B cell (primary cell): ENCODE measurements at regions of chr3 and their contacts with region 1.

Region 1: DNA sequence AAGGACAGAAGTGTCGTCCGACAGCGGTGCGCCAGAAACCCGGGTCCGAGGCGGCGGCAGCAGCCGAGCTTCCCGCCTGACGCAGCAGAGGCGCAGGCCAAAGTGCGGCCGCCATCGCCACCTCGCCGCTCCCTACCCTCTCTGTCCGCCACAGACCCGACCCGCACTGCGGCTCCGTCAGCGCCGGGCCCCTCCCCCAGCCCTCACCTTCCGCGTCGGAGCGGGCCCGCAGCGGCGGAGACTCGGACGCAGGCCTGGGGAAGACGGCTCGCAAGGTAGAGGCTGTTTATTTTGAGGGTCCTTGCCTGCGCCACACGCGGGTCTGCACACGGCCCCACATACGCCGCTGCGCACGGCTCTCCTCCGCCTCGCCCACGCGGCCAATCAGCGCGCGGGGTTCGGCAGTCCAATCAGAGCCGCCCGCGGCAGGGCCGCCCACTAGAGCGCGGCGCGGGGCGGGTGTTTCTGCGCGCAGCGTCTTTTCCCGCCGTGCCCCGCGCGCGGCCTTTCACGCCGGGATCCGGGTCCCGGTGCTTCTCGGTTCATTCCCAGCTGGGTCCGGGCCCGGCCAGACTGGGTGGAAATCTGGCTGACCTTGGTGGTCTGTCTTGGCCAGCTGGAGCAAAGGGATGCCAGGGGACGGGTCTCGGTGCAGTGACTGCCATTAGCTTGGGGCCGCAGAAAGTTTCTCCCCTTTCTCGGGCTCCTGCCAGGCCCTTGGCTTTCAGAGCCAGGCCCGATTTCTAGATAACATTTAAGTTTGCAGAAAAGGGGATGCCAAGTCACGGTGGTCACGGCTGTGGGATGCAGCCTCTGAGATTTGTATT is at the start of gene CNBP:
- DNase-seq: peak; percentile 95
- ATAC-seq: peak; percentile 97
- H3K4me3 ChIP-seq: peak within 1 kb of the TSS; percentile 71 to 100 (median 98)
- H3K4me3 Mint-ChIP-seq: peak within 1 kb of the TSS; percentile 89
- H3K27ac ChIP-seq: peak within 1 kb of the TSS; percentile 90 to 92
- H3K27ac Mint-ChIP-seq: peak within 1 kb of the TSS; percentile 99
- H3K4me1 ChIP-seq: peaks cover 23 to 52% of the 10 kb centered on the region in 2 donors
- H3K4me1 Mint-ChIP-seq: peaks cover 44% of the 10 kb centered on the region
- H3K27me3 ChIP-seq: no peaks in the 10 kb centered on the region
- H3K27me3 Mint-ChIP-seq: no peaks in the 10 kb centered on the region
- CTCF ChIP-seq: no peak
- total RNA-seq, gene CNBP: 294 and 304 TPM in 2 replicates

Region 2: GRCh38 chr3:128725932-128726690 is 457.7 kb before region 1 on chr3 and contains the start of gene RAB7A:
- CTCF ChIA-PET with region 1: no interaction called
- POLR2A ChIA-PET with region 1: no interaction called
- intact Hi-C with region 1: loop called (anchors 5 kb)
- DNase-seq: peak; percentile 99
- ATAC-seq: peak; percentile 96
- H3K4me3 ChIP-seq: peak within 1 kb of the TSS; percentile 79 to 98 (median 93)
- H3K4me3 Mint-ChIP-seq: peak within 1 kb of the TSS; percentile 99
- H3K27ac ChIP-seq: peak within 1 kb of the TSS; percentile 92 to 99
- H3K27ac Mint-ChIP-seq: peak within 1 kb of the TSS; percentile 100
- H3K4me1 ChIP-seq: peaks cover 45 to 46% of the 10 kb centered on the region in 2 donors
- H3K4me1 Mint-ChIP-seq: peaks cover 52% of the 10 kb centered on the region
- H3K27me3 ChIP-seq: no peaks in the 10 kb centered on the region
- H3K27me3 Mint-ChIP-seq: peaks cover 7% of the 10 kb centered on the region
- CTCF ChIP-seq: no peak
- total RNA-seq, gene RAB7A: 138 and 144 TPM in 2 replicates

Region 3: DNA sequence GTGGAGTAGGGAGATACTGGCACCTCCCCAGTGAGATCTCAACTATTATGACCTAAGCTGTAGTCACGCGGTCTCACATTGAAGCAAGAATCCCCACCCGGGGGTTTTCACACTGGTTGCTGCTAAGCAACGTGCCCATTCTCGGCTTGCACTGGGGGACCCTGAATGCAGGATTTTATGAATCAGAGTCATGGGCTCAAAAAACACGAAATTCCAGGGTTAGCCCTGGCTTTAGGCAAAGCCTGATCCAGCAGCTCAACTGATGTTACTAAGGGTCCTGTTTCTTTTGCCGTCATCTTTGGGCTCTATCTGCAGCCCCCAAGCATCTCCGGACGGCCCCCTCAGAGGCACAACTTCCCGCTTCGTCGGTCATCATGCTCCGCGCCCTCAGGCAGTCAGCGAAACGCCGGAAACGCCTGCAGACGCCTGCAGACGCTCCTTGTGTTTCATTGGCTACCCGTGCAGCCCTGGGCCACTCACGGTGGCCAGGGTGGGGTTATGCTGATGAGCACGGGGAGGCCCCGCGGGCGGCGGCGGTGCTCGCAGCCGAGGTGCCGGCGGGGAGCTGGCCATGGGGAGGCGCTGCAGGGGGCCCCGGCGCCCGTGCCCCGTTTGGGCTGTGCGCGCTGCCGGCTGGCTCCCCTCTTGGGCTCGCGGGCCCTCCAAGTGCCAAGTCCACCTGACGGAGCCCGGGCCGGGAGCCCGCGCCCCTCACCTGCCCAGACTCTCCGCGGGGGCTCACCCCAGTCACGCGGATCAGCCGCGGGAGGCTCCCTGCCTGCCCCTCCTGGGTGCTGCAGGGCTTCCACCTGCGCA is 156.8 kb before region 1 on chr3:
- CTCF ChIA-PET with region 1: interaction called, 3 read pairs
- POLR2A ChIA-PET with region 1: no interaction called
- intact Hi-C with region 1: loop called (anchors 2 kb)
- DNase-seq: peak; percentile 95
- ATAC-seq: peak; percentile 98
- H3K4me3 ChIP-seq: peak overlapping the region; percentile 30 to 71 (median 61)
- H3K4me3 Mint-ChIP-seq: peak overlapping the region; percentile 91
- H3K27ac ChIP-seq: peak overlapping the region; percentile 74 to 83
- H3K27ac Mint-ChIP-seq: peak overlapping the region; percentile 95
- H3K4me1 ChIP-seq: peaks cover 13 to 15% of the 10 kb centered on the region in 2 donors
- H3K4me1 Mint-ChIP-seq: peaks cover 22% of the 10 kb centered on the region
- H3K27me3 ChIP-seq: peaks cover 0 to 6% (median 0%) of the 10 kb centered on the region in 4 experiments
- H3K27me3 Mint-ChIP-seq: peaks cover 3% of the 10 kb centered on the region
- CTCF ChIP-seq: peak; percentile 91

Region 4: DNA sequence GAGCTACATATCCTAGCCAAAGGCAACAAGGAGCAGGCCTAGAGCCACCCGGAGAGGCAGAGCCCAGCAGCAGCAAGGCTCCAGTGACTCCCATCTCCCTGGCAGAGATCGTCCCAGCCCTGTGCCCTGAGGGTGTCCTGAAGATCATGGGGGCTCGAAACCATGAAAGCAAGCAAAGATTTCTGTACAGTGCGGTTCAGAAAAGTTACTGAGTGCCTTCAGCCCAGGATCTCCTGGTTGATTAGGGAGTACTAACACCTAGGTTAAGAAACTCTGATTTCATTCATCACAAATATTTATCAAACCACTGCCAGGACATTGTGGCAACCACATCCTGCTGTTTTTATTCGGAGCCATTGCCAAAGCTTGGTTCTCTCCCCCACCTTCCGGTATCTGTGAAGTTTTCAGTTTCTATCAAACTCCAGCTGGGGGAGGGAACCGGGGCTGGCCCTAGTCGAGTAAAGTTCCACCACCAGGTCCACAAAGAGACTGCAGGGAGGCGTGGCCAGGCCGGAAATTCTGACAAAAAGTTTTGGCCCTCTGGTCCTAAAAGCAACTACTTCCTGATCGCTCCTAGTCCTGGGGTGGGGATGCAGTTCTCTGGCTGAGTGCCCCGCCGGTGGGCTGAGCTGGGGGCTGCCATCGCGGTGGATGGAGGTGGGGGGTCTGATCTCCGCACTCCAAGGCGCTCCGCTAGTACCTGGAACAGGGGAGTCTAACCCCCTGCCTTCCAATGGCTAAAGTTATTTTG is 63.4 kb before region 1 on chr3:
- CTCF ChIA-PET with region 1: interaction called, 4 read pairs
- POLR2A ChIA-PET with region 1: interaction called, 5 read pairs
- intact Hi-C with region 1: loop called (anchors 1 kb)
- DNase-seq: peak; percentile 93
- ATAC-seq: peak; percentile 61
- H3K4me3 ChIP-seq: peak overlapping the region; percentile 68 to 81 (median 76)
- H3K4me3 Mint-ChIP-seq: peak overlapping the region; percentile 88
- H3K27ac ChIP-seq: peak overlapping the region; percentile 61 to 62
- H3K27ac Mint-ChIP-seq: peak overlapping the region; percentile 84
- H3K4me1 ChIP-seq: peaks cover 42 to 46% of the 10 kb centered on the region in 2 donors
- H3K4me1 Mint-ChIP-seq: peaks cover 53% of the 10 kb centered on the region
- H3K27me3 ChIP-seq: no peaks in the 10 kb centered on the region
- H3K27me3 Mint-ChIP-seq: no peaks in the 10 kb centered on the region
- CTCF ChIP-seq: peak; percentile 30

Region 5: DNA sequence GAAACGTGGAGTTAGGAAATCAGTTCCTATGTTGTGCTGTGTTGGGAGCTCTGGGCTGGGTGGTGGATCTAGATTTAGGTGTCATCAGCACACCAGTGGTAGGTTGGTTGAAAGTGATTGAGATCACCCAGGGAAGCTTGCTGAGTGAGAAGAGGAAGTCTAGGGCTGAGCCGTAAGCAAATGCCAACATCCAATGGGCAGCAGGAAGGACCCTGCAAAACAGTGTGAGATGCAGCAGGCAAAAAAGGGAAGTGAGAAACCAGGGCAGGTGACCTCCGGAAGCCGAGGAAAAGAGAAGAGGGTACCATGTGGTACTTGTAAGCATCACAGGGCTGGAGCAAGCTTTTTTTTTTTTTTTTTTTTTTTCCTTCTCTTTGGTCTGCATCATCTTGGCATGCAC is 49.8 kb after region 1 on chr3:
- CTCF ChIA-PET with region 1: interaction called, 10 read pairs
- POLR2A ChIA-PET with region 1: interaction called, 28 read pairs
- intact Hi-C with region 1: loop called (anchors 1 kb)
- DNase-seq: peak; percentile 95
- ATAC-seq: peak; percentile 94
- H3K4me3 ChIP-seq: no peak overlapping the region
- H3K4me3 Mint-ChIP-seq: peak overlapping the region; percentile 50
- H3K27ac ChIP-seq: peak overlapping the region; percentile 71 to 87
- H3K27ac Mint-ChIP-seq: peak overlapping the region; percentile 97
- H3K4me1 ChIP-seq: peaks cover 28 to 36% of the 10 kb centered on the region in 2 donors
- H3K4me1 Mint-ChIP-seq: peaks cover 47% of the 10 kb centered on the region
- H3K27me3 ChIP-seq: no peaks in the 10 kb centered on the region
- H3K27me3 Mint-ChIP-seq: no peaks in the 10 kb centered on the region
- CTCF ChIP-seq: no peak

Region 6: DNA sequence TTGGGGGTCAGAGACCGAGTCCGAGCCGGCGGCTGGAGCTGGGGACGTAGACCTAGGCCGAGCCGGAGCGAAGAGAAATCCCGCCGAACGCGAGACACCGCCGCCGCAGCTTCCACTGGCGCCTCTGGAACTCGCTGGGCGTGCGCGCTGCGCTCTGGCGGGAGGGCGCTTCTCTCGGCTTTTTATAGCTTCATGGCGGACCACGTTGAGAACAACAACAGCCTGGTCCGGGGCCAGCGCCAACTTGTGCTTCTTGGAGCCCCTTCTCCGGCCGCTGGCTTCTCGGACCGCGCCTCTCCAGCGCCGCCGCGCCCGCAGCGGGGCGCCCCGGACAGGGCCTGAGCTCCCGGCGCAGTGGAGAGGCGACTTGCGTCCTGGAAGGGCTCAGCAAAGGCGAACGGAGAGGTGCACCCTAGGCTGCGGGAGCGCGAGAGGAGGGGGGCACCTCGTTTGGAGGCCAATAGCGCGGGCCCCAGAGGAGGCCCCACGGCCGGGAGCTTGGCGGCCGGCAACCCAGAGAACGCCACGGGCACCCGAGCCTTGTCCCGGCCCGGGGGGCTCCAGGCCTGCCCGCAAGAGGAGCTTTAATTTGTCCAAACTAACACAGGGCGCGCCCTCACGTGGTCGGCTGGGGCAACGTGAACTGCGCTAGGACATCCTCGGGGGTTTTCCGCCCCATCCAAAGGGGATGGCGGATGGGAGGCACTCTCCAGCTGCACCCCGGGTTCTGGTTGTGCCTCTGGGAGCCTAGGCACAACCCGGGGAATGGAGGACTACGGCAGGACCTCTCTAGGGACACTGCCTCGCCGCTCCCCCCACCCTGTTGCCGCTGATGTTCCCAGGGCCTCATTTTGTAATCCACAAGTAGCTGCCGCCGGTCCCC is 132.6 kb after region 1 on chr3:
- CTCF ChIA-PET with region 1: no interaction called
- POLR2A ChIA-PET with region 1: interaction called, 3 read pairs
- intact Hi-C with region 1: loop called (anchors 2 kb)
- DNase-seq: peak; percentile 88
- ATAC-seq: peak; percentile 45
- H3K4me3 ChIP-seq: peak overlapping the region; percentile 30 to 84 (median 82)
- H3K4me3 Mint-ChIP-seq: peak overlapping the region; percentile 82
- H3K27ac ChIP-seq: peak overlapping the region in 1 of 2 donors; percentile 78
- H3K27ac Mint-ChIP-seq: peak overlapping the region; percentile 87
- H3K4me1 ChIP-seq: peaks cover 26 to 40% of the 10 kb centered on the region in 2 donors
- H3K4me1 Mint-ChIP-seq: peaks cover 27% of the 10 kb centered on the region
- H3K27me3 ChIP-seq: peaks cover 0 to 30% (median 15%) of the 10 kb centered on the region in 4 experiments
- H3K27me3 Mint-ChIP-seq: peaks cover 18% of the 10 kb centered on the region
- CTCF ChIP-seq: peak; percentile 71